PC-9 (cell line): ENCODE measurements at regions of chr6 and their contacts with region 1.

Region 1: DNA sequence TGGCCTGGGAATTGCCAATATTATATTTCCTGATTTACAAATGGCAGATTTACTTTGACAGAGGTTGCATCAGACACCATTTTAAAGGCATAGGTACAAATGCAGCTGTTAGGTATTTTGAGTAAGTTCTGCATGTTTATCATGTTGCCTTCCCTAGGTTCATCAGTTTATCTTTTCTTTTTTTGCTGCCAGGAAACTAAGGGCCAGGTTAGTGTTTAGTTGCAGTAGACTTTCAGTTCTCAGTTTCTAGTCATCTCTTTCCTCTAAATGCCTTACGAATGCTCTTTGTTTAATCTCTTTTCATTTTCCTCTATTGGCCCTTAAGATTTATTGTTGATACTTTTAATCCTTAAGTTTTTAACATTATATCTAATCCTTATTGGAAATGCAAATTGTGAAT is 129.9 kb downstream of the SMAP1 start:
- DNase-seq: no peak
- H3K4me3 ChIP-seq: no peak overlapping the region
- H3K27ac ChIP-seq: no peak overlapping the region
- H3K4me1 ChIP-seq: no peaks in the 10 kb centered on the region
- H3K27me3 ChIP-seq: no peaks in the 10 kb centered on the region
- CTCF ChIP-seq: no peak

Region 2: GRCh38 chr6:70538376-70538775 is 259.2 kb before region 1 on chr6:
- CTCF ChIA-PET with region 1: no interaction called
- POLR2A ChIA-PET with region 1: interaction called, 11 read pairs
- intact Hi-C with region 1: no loop called
- DNase-seq: no peak
- H3K4me3 ChIP-seq: no peak overlapping the region
- H3K27ac ChIP-seq: no peak overlapping the region
- H3K4me1 ChIP-seq: no peaks in the 10 kb centered on the region
- H3K27me3 ChIP-seq: no peaks in the 10 kb centered on the region
- CTCF ChIP-seq: no peak